ENCODE measurements at regions of chr10 and their contacts with region 1.

Region 1: GRCh38 chr10:73785221-73785720 is at the start of gene ZSWIM8:
- DNase-seq: peak; percentile 95
- H3K4me3 ChIP-seq: peak within 1 kb of the TSS; percentile 93 to 98
- H3K27ac ChIP-seq: peak within 1 kb of the TSS; percentile 83 to 95
- H3K4me1 ChIP-seq: peaks cover 0 to 22% of the 10 kb centered on the region in 2 experiments; a peak in 3 of 4 replicates
- H3K27me3 ChIP-seq: no peaks in the 10 kb centered on the region
- CTCF ChIP-seq: no peak
- EP300 ChIP-seq: no peak
- RAD21 ChIP-seq: no peak
- polyA plus RNA-seq, gene ZSWIM8: 97.3 and 112 TPM in 2 replicates

Region 2: GRCh38 chr10:73614720-73615119 is 170.6 kb before region 1 on chr10:
- CTCF ChIA-PET with region 1: no interaction called
- POLR2A ChIA-PET with region 1: no interaction called
- DNase-seq: no peak
- H3K4me3 ChIP-seq: no peak overlapping the region
- H3K27ac ChIP-seq: no peak overlapping the region
- H3K4me1 ChIP-seq: no peaks in the 10 kb centered on the region
- H3K27me3 ChIP-seq: no peaks in the 10 kb centered on the region
- CTCF ChIP-seq: no peak
- EP300 ChIP-seq: no peak
- RAD21 ChIP-seq: no peak

Region 3: GRCh38 chr10:73772280-73773151 is 12.8 kb before region 1 on chr10:
- CTCF ChIA-PET with region 1: interaction called, 7 read pairs
- POLR2A ChIA-PET with region 1: interaction called, 25 read pairs
- DNase-seq: peak; percentile 95
- H3K4me3 ChIP-seq: peak overlapping the region; percentile 79 to 88
- H3K27ac ChIP-seq: peak overlapping the region; percentile 88 to 98
- H3K4me1 ChIP-seq: peaks cover 16 to 30% of the 10 kb centered on the region in 2 experiments
- H3K27me3 ChIP-seq: no peaks in the 10 kb centered on the region
- CTCF ChIP-seq: no peak
- EP300 ChIP-seq: no peak
- RAD21 ChIP-seq: no peak

Region 4: DNA sequence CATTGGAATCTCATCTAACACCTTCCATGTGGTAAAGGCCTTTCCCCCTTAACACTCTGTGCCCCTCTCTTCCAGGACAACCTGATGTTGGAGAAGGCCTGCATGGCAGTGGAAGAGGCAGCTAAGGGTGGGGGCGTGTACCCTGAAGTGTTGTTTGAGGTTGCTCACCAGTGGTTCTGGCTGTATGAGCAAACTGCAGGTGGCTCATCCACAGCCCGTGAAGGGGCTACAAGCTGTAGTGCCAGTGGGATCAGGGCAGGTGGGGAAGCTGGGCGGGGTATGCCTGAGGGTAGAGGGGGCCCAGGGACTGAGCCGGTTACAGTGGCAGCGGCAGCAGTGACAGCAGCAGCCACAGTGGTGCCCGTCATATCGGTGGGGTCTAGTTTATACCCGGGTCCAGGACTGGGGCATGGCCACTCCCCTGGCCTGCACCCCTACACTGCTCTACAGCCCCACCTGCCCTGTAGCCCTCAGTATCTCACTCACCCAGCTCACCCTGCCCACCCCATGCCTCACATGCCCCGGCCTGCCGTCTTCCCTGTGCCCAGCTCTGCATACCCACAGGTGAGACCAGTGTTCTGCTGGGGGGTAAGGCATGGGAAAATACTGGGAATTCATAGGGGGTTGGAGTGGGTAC is 13.8 kb after region 1 on chr10:
- CTCF ChIA-PET with region 1: interaction called, 8 read pairs
- POLR2A ChIA-PET with region 1: interaction called, 13 read pairs
- DNase-seq: no peak
- H3K4me3 ChIP-seq: no peak overlapping the region
- H3K27ac ChIP-seq: no peak overlapping the region
- H3K4me1 ChIP-seq: no peaks in the 10 kb centered on the region
- H3K27me3 ChIP-seq: no peaks in the 10 kb centered on the region
- CTCF ChIP-seq: no peak
- EP300 ChIP-seq: no peak
- RAD21 ChIP-seq: no peak

Region 5: DNA sequence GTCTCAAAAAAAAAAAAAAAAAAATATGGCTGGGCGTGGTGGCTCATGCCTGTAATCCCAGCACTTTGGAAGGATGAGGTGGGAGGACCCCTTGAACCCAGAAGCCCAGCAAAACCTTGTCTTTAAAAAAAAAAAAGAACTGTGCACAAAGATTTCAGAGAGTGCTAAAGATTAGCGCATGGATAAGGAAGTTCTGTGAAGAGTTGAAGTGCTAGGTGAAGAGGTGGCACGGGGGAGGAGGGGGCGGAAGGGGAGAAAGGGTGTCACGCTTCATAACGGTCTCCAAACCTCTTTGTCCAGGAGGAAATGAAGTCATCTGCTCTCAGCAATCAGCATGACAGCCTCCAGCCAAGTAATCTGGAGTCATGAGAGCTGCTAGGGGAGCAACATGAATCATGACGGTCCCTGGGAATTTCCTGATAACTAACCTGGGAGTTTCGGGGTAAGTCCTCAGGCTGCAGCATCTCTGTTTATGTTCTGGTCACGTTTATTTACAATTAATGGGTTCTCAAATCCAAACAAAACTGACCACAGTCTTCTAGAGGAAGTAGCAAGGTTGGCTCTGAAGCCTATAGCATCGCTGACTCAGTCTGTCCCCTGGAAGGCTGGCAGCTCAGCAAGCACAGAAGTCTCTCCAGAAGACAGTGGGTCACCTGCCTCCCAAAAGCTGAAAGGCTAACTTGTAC is 123.7 kb after region 1 on chr10:
- CTCF ChIA-PET with region 1: no interaction called
- POLR2A ChIA-PET with region 1: no interaction called
- DNase-seq: no peak
- H3K4me3 ChIP-seq: 0 out of 4 replicates have a peak overlapping the region, but pooled peaks of 1 of the 2 experiments have one; percentile 9
- H3K27ac ChIP-seq: peak overlapping the region in 1 of 2 experiments; percentile 92; a peak in 3 of 4 replicates
- H3K4me1 ChIP-seq: peaks cover 15 to 20% of the 10 kb centered on the region in 2 experiments; a peak in 2 of 4 replicates
- H3K27me3 ChIP-seq: no peaks in the 10 kb centered on the region
- CTCF ChIP-seq: no peak
- EP300 ChIP-seq: peak in 1 of 2 experiments; percentile 82; a peak in 1 of 4 replicates
- RAD21 ChIP-seq: no peak

Measured in SK-N-SH (cell line).